ENCODE measurements at regions of chr16 and their contacts with region 1.

Region 1: GRCh38 chr16:21708533-21709115 is 44.9 kb downstream of the OTOA start:
- DNase-seq: peak; percentile 61 to 70
- H3K4me3 ChIP-seq: no peak overlapping the region
- H3K27ac ChIP-seq: no peak overlapping the region
- H3K4me1 ChIP-seq: no peaks in the 10 kb centered on the region
- H3K27me3 ChIP-seq: no peaks in the 10 kb centered on the region
- CTCF ChIP-seq: peak; percentile 87

Region 2: GRCh38 chr16:21584817-21585216 is 123.8 kb before region 1 on chr16:
- CTCF ChIA-PET with region 1: no interaction called
- POLR2A ChIA-PET with region 1: no interaction called
- intact Hi-C with region 1: loop called (anchors 2 kb)
- DNase-seq: no peak
- H3K4me3 ChIP-seq: no peak overlapping the region
- H3K27ac ChIP-seq: no peak overlapping the region
- H3K4me1 ChIP-seq: peaks cover 20% of the 10 kb centered on the region
- H3K27me3 ChIP-seq: no peaks in the 10 kb centered on the region
- CTCF ChIP-seq: no peak

Measured in PC-9 (cell line).